HEK293 (cell line): ENCODE measurements at regions of chr6 and their contacts with region 1.

Region 1: DNA sequence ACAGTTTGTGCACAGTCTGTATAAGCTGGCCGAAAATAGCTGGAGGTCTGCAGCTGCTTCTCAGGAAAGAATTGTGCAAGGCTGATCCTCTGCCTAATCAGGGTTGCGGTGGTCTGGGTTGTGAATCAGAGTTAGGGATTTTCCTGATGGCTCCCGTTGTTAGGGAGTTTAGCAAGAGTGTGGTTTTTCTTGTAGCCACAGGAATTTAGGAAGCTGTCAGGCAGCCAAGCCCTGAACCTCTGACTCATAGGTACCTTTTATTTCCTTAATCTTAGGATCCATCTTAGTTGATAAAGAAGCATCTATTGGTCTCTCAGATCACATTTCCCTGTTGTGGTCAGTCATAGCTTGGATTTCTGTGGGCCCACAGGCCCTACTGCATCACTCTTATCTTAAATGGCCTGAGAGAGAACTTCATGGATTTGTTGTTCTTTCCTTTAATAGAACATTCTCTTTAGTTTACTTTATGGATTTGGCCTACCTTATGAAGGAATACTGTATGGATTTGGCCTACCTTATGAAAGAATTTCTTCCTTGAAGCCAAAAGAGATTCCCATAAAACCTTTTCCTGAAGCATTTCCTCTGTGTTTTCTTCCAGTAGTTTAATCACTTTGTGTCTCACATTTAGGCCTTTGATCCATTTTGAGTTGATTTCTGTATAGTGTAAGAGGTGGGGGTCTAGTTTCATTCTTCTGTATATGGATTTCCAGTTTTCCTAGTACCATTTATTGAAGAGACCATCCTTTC is 10.3 kb downstream of the KIF25 start:
- H3K4me3 ChIP-seq: no peak overlapping the region
- H3K27ac ChIP-seq: peak overlapping the region; percentile 46
- H3K4me1 ChIP-seq: peaks cover 3% of the 10 kb centered on the region; the same call in 1 of the 2 replicates
- CTCF ChIP-seq: no peak

Region 2: DNA sequence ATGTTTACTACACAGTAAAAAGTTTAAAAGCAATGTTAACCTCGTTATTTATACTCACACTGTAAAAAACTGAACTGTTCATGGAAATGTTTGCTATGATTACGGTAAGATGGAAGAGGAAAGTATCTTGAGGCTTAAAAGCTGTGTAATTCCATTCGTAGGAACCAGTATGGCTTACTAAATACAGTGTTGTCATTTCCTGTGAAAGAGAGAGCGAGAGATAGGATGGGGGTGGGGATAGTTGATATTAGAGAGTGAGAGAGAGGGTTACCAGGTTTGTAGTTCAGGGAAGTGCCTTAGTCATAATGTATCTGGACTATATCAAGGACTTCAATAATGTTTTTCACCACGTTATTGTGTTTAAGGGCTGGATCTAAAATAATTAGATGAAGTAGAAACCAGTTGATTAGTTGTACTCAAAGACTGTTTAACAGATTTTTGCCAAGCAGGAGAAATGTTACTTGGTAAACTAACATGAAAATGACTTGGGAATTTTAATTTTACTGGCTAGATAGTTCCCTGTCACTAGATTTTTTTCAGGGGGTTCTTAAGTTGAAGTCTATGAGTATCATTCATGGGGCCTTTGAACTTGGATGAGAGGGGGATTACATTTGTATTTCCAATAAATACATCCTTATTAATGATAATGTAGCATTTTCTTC is 150.6 kb before region 1 on chr6:
- CTCF ChIA-PET with region 1: no interaction called
- POLR2A ChIA-PET with region 1: no interaction called
- H3K4me3 ChIP-seq: no peak overlapping the region
- H3K27ac ChIP-seq: no peak overlapping the region
- H3K4me1 ChIP-seq: peaks cover 38% of the 10 kb centered on the region
- CTCF ChIP-seq: no peak

Region 3: GRCh38 chr6:168025831-168026710 is 18.3 kb after region 1 on chr6:
- CTCF ChIA-PET with region 1: no interaction called
- POLR2A ChIA-PET with region 1: interaction called, 11 read pairs
- H3K4me3 ChIP-seq: no peak overlapping the region
- H3K27ac ChIP-seq: no peak overlapping the region
- H3K4me1 ChIP-seq: peaks cover 26% of the 10 kb centered on the region
- CTCF ChIP-seq: no peak

Region 4: DNA sequence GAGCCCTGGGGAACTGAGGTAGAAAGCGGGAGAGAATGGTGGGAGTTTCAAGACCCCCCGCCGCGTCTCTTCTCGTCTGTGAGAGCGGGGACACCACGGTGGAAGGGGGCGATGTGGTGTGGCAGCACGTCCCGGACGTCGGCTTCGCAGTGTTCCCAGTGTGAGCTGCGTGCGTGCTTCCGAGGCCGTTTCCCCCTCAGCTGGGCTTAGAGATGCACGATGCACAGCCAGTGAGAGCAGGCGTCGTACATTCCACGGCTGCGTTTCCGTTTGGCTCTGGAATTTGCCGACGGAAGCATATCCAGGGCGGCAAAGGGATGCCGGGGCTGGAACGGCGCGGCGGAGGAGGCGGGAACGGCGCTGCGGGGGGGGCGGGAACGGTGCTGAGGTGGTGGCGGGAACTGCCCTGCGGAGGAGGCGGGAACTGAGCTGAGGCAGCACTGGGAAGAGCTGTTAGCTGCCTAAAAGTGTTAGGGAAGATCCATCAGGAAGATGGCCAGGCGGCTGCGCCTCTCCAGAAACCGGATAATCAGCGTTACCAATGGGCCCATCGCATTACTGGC is 27.4 kb after region 1 on chr6:
- CTCF ChIA-PET with region 1: no interaction called
- POLR2A ChIA-PET with region 1: interaction called, 11 read pairs
- H3K4me3 ChIP-seq: peak overlapping the region; percentile 34
- H3K27ac ChIP-seq: peak overlapping the region; percentile 77
- H3K4me1 ChIP-seq: peaks cover 8% of the 10 kb centered on the region
- CTCF ChIP-seq: no peak

Region 5: DNA sequence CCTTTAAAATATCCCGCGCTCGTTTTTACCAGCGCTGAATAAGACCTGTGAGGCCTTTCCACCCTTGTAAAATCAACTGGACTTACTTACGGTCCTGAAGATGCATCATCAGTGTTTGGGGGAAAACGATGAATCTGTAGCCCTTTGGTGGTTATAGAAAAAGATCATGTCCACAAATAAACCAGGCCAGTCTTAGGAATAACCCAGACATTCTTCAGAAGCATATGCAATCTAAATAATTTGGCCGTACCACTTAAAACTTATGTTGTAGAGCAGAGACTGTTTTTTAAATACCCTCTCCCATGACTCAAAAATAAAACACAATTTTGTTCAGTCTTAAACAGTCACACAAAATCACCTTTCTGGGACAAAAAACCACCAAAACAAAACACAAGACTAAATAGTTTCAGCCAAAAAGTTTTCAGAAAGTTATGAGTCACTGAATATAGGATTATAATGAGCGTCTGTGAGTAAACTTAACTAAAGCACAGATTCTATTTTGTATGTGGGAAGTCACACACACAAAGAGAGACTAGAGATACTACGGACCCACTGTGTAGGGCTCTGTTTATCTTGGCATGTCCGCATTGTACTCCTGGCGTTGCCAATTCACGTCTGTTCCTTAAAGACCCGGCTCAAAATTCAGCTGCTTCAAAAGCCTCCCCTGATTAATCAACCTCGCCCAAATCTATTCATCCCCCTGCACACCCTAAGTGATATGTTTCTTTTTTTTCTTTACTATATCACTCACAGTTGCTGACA is 406.8 kb after region 1 on chr6:
- CTCF ChIA-PET with region 1: no interaction called
- POLR2A ChIA-PET with region 1: no interaction called
- H3K4me3 ChIP-seq: no peak overlapping the region
- H3K27ac ChIP-seq: no peak overlapping the region
- H3K4me1 ChIP-seq: no peaks in the 10 kb centered on the region
- CTCF ChIP-seq: no peak